ENCODE measurements at regions of chr13 and their contacts with region 1.

Region 1: DNA sequence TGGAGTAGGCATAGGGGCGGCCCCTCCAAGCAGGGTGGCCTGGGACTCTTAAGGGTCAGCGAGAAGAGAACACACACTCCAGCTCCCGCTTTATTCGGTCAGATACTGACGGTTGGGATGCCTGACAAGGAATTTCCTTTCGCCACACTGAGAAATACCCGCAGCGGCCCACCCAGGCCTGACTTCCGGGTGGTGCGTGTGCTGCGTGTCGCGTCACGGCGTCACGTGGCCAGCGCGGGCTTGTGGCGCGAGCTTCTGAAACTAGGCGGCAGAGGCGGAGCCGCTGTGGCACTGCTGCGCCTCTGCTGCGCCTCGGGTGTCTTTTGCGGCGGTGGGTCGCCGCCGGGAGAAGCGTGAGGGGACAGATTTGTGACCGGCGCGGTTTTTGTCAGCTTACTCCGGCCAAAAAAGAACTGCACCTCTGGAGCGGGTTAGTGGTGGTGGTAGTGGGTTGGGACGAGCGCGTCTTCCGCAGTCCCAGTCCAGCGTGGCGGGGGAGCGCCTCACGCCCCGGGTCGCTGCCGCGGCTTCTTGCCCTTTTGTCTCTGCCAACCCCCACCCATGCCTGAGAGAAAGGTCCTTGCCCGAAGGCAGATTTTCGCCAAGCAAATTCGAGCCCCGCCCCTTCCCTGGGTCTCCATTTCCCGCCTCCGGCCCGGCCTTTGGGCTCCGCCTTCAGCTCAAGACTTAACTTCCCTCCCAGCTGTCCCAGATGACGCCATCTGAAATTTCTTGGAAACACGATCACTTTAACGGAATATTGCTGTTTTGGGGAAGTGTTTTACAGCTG is at the starts of genes BRCA2 and ZAR1L:
- DNase-seq: peak; percentile 91 to 97 (median 96)
- ATAC-seq: peak; percentile 99
- H3K4me3 ChIP-seq: peak within 1 kb of the TSS; percentile 90
- H3K27ac ChIP-seq: peak within 1 kb of the TSS; percentile 95
- H3K4me1 ChIP-seq: peaks cover 4% of the 10 kb centered on the region
- H3K27me3 ChIP-seq: no peaks in the 10 kb centered on the region
- total RNA-seq, gene BRCA2: 0.51 to 1.2 (median 1.1) TPM
- total RNA-seq, gene ZAR1L: not detected

Region 2: GRCh38 chr13:31824705-31825517 is 490.5 kb before region 1 on chr13:
- intact Hi-C with region 1: loop called in 1 of 4 experiments (anchors 10 kb)
- DNase-seq: no peak
- ATAC-seq: peak; percentile 33 to 39
- H3K4me3 ChIP-seq: no peak overlapping the region
- H3K27ac ChIP-seq: no peak overlapping the region
- H3K4me1 ChIP-seq: no peaks in the 10 kb centered on the region
- H3K27me3 ChIP-seq: no peaks in the 10 kb centered on the region

Region 3: DNA sequence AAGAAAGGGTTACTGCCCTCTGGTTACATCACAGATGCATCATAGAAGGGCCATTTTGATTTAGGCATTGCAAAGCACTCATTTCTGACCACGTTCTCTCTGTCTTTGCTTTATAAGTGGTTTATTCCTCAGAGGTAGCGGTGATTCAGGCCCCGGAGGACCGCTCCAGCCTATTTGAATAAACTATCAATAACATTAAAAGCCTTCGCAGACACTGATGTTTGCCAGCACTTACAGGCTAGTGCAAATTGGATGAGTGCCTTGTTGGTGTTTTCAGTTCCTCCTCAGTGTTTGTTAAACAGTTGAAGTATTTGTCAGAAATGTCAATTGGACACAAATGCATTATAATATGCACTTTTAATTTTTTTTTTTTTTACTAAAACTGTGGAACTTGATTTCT is 455.9 kb before region 1 on chr13:
- intact Hi-C with region 1: no loop called
- DNase-seq: no peak
- ATAC-seq: peak; percentile 28 to 35
- H3K4me3 ChIP-seq: no peak overlapping the region
- H3K27ac ChIP-seq: peak overlapping the region; percentile 23
- H3K4me1 ChIP-seq: peaks cover 2% of the 10 kb centered on the region
- H3K27me3 ChIP-seq: no peaks in the 10 kb centered on the region

Region 4: GRCh38 chr13:31909864-31910551 is 405.4 kb before region 1 on chr13:
- intact Hi-C with region 1: loop called (anchors 5 to 10 kb)
- DNase-seq: peak in 1 of 3 donors; percentile 25
- ATAC-seq: peak; percentile 27 to 64
- H3K4me3 ChIP-seq: no peak overlapping the region
- H3K27ac ChIP-seq: no peak overlapping the region
- H3K4me1 ChIP-seq: peaks cover 2% of the 10 kb centered on the region
- H3K27me3 ChIP-seq: no peaks in the 10 kb centered on the region

Region 5: DNA sequence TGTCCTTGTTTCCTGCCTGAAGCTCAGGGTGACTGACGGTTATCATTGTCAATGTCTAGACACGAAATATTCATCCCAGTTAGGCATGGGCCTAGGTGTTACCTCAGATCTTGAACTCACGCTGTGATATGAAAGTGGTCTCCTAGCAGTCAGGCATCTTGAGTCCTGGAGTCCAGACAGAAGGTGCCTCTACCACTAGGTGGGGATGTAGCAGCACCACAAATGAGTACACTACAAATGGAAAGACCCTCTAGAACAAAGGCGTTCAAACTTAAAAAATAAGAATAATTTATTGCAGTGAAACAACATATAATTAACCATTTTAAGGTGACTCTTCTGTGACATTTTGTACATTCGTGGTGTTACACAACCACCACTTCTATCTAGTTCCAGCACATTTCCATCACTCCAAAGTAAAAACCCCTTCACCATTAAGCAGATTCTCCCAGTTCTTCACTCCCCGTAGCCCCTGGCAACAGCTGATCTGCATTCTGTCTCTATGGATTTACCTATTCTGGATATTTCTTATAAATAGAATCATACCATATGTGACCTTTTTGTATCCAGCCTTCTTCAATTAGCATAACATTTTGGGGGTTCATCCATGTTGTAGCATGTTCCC is 295.7 kb before region 1 on chr13:
- intact Hi-C with region 1: loop called in 2 of 4 experiments (anchors 5 to 10 kb)
- DNase-seq: peak in 2 of 3 donors; percentile 27 to 42
- ATAC-seq: peak; percentile 61 to 71
- H3K4me3 ChIP-seq: no peak overlapping the region
- H3K27ac ChIP-seq: no peak overlapping the region
- H3K4me1 ChIP-seq: peaks cover 9% of the 10 kb centered on the region
- H3K27me3 ChIP-seq: no peaks in the 10 kb centered on the region

Region 6: DNA sequence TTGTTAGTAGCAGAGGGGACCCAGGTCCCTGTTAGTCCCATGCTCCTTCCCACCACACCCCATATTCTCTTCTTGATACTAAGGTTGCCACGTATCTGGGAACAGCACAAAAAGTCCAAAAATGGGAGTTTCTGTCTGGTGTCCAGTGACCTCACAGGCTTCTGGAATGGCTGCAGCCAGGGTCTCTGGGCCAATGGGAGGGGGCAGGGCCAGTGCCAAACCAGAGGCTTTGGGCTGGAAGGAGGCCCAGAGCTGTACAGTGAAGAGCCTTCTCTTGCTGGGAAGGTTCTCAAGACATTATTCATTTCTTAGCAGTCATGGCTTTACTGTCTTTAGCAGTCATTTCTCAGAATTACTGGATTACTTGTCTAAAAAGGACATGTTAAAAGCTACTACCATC is 164.6 kb before region 1 on chr13:
- intact Hi-C with region 1: no loop called
- DNase-seq: peak; percentile 84 to 92 (median 90)
- ATAC-seq: peak; percentile 91 to 94
- H3K4me3 ChIP-seq: no peak overlapping the region
- H3K27ac ChIP-seq: peak overlapping the region; percentile 77
- H3K4me1 ChIP-seq: peaks cover 3% of the 10 kb centered on the region
- H3K27me3 ChIP-seq: no peaks in the 10 kb centered on the region

Region 7: DNA sequence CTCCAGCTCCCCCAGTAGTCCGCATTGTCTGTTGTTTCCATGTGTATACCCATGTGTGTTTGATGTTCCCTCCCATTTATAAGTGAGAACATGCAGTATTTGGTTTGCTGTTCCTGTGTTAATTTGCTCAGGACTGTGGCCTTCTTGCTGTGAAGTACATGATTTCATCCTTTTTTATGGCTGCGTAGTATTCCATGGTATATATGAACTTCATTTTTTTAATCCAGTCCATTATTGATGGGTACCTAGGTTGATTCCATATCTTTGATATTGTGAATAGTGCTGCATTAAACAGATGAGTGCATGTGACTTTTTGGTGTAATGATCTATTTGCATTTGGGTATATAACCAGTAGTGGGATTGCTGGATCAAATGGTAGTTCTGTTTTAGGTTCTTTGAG is 446.0 kb after region 1 on chr13:
- intact Hi-C with region 1: no loop called
- DNase-seq: no peak
- ATAC-seq: no peak
- H3K4me3 ChIP-seq: no peak overlapping the region
- H3K27ac ChIP-seq: no peak overlapping the region
- H3K4me1 ChIP-seq: no peaks in the 10 kb centered on the region
- H3K27me3 ChIP-seq: no peaks in the 10 kb centered on the region

Measured in right cardiac atrium (tissue), 5 donors.